GM13977 (cell line): ENCODE measurements at regions of chr17 and their contacts with region 1.

Region 1: DNA sequence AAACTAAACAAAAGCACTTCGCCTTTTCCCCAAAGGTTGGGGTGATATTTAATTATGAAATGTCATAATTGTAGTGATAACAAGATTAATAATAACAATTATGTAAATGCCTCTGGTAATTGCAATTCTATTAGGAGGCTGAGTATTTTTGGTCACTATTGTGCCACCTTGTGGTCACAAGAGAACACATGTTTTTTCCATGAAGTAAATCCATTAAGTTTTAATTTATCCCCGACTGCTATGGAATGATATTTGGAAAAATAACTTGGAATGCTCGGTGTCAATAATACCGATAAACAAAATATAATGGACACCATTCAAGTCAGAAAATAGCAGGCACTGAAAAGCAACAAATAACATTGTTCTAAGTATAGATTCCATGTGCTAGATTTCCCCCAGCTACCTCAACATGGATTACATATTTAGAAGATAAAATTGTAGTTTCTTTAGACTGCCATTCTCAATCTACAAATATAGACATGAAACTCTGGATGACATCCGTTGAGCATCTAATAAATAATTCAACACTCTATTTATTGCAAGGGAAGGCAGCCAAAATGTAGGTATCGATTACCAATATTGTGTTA is 25.0 kb upstream of the KCNJ2 start:
- DNase-seq: no peak
- CTCF ChIP-seq: peak; percentile 56

Region 2: DNA sequence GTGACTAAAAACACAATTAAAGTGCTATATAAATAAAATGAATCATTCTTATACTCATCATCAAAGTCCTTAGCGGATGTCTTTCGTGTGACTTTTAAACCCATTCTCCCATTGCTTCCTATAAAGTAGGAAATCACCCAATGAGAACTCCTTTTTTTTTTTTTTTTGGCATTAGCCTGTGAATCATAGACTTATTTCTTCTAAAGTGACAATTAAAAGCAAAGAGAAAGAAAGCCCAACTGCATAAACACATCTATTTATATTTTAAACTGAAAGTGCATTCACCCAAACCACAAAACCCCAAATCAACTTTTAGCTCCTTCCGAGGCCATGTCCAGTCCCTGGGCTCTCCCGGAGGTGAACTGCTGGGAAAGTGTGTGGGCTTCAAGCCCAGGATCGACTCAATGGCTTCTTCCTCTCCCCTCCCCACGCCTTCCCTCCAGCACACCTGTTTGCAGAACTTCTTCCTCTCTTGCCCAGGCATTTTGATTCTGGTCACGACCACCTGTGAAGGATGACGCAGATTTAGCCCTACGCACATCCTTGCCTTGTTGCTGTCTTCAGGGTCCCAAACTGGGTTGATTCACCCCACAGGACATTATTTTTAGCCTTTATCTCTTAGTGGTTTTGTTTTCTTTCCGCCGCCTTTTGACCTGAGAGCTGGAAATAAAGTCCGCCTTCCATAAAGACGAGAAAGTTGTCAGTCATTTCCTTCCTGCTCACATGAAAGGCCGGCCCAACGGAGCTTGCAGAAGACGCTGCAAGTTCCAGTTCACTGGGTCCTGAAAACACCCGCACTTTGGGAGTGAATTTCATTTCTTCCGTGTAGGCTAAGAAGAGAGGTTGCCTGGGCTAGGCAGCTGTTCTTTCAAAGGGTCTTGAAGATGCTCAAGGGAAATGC is 563.0 kb before region 1 on chr17:
- in situ Hi-C with region 1: loop called (anchors 10 kb)
- DNase-seq: peak; percentile 38
- CTCF ChIP-seq: no peak

Region 3: DNA sequence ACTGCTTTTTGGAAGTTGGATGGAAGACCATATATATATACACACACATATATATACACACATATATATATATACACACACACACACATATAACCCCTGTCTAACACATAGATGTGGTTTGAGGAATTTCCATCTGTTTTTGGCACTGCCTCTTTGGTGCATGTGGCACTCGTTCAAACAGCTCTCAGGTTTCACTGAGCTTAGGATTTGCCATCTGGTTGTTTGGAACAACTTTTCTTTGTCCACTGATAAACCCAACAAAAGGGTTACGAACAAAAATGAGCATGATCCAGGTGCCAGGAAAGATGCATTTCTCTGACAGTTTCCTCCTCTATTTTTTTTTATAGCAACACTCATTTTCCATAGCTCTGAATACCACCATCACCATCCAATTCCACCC is 83.9 kb before region 1 on chr17:
- in situ Hi-C with region 1: no loop called
- DNase-seq: no peak
- CTCF ChIP-seq: no peak